Right cardiac atrium (tissue), 5 donors: ENCODE measurements at regions of chr12 and their contacts with region 1.

Region 1: GRCh38 chr12:93742110-93742934 is 65.1 kb downstream of the CRADD start:
- DNase-seq: peak; percentile 76 to 93 (median 91)
- ATAC-seq: peak; percentile 95 to 96
- H3K4me3 ChIP-seq: peak overlapping the region; percentile 84
- H3K27ac ChIP-seq: peak overlapping the region; percentile 98
- H3K4me1 ChIP-seq: peaks cover 12% of the 10 kb centered on the region
- H3K27me3 ChIP-seq: no peaks in the 10 kb centered on the region

Region 2: DNA sequence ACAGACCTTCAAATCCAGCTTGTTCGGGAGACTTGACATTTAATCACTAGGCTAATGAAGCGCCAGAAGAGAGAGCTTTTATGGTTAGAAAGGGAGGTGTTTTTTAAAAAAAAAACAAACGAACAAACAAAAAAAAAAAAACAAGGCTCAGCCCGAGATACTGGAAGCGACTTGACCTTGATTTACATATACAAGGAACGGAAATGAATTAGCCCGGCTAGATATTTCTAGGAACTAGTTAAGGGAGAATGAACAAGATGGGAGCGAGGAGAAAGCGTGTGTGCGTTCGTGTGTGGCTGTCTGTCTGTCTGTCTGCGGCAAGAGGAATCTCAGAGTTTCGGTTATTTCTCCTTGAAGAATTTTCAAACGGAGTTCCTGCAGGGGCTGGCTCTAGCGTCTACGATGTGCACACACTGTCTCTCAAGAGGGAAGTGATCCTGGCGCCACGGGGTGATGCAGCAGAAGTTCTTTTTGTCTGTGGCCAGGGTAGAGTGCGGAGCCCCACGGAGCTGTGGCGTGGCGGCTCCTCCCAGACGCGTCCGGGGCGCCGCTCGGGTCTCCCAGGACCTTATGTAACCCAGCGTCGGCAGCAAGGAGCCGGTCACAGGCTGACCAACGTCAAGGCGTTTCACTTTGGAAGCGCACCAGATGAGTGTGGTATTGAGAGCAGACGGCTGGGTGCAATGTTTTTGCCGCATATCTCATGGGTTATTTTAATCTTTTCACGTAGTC is 151.0 kb before region 1 on chr12:
- intact Hi-C with region 1: loop called in 2 of 4 experiments (anchors 5 to 10 kb)
- DNase-seq: peak; percentile 88 to 95 (median 93)
- ATAC-seq: peak; percentile 98
- H3K4me3 ChIP-seq: peak overlapping the region; percentile 32
- H3K27ac ChIP-seq: peak overlapping the region; percentile 64
- H3K4me1 ChIP-seq: peaks cover 1% of the 10 kb centered on the region
- H3K27me3 ChIP-seq: no peaks in the 10 kb centered on the region

Region 3: DNA sequence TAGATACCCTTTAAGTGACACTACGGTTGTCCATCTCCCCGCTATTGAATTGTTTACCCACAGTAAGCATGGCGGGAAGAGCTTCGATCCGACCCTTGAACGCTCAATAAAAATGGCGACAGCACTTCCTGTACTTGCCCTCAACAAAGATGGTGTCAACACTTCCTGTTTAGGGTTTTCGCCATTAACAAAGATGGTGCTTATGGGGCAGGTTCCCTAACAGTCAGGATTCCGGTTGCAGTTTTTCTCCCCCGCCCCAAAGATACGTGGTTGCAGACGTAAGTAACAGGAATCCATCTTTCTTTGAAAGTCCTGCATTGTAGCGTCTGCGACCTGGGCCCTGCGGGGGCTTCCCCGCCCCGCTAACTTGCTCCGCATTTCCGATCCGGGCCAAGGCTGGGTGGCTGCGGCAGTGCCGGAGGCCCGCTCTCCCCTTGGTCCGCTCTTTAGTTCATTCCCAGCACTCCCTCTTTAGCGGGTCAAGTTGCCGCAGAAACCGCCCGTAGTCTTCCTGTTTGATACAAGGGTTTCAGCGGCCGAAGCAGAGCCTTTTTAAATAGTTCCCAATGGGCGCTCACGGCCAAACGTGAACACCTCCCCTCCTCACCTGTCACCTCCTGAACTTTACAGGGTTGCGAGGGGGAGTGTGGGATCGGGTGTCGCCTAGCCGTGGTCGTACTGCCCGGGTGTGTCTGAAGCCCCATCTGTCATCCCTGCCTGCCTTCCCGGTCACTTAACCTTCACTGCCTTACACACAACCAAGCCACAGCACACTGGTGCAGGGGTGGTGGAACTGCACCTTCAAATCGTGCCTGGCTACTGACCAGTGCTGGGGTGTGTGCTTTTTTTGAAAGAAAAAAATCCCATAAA is 64.9 kb before region 1 on chr12 and contains the start of gene CRADD:
- intact Hi-C with region 1: loop called (anchors 5 to 10 kb)
- DNase-seq: peak; percentile 77 to 89 (median 87)
- ATAC-seq: peak; percentile 96 to 97
- H3K4me3 ChIP-seq: peak within 1 kb of the TSS; percentile 69
- H3K27ac ChIP-seq: peak within 1 kb of the TSS; percentile 100
- H3K4me1 ChIP-seq: peaks cover 7% of the 10 kb centered on the region
- H3K27me3 ChIP-seq: no peaks in the 10 kb centered on the region
- total RNA-seq, gene CRADD: 29.1 to 45.7 (median 38.3) TPM

Region 4: DNA sequence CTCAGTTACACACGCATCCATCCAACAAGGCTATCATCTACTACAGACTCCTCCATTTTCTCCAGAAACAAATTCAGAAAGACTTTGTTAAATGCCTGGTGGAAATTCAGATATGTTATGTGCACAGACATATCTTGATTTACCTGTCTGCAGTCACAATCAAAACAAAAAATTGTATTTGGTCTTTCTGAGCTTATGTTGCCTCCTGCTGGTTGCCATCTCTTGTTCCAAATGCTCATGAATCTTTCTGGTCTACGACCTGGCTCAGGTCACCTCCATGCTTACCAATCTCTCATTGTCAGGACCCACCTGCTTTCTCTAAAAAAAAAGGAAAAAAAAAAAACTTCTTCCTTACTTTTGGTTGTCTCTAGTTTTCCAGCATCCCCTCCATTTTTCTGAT is 236.9 kb after region 1 on chr12:
- intact Hi-C with region 1: loop called in 1 of 4 experiments (anchors 10 kb)
- DNase-seq: no peak
- ATAC-seq: no peak
- H3K4me3 ChIP-seq: no peak overlapping the region
- H3K27ac ChIP-seq: peak overlapping the region; percentile 45
- H3K4me1 ChIP-seq: peaks cover 18% of the 10 kb centered on the region
- H3K27me3 ChIP-seq: no peaks in the 10 kb centered on the region

Region 5: DNA sequence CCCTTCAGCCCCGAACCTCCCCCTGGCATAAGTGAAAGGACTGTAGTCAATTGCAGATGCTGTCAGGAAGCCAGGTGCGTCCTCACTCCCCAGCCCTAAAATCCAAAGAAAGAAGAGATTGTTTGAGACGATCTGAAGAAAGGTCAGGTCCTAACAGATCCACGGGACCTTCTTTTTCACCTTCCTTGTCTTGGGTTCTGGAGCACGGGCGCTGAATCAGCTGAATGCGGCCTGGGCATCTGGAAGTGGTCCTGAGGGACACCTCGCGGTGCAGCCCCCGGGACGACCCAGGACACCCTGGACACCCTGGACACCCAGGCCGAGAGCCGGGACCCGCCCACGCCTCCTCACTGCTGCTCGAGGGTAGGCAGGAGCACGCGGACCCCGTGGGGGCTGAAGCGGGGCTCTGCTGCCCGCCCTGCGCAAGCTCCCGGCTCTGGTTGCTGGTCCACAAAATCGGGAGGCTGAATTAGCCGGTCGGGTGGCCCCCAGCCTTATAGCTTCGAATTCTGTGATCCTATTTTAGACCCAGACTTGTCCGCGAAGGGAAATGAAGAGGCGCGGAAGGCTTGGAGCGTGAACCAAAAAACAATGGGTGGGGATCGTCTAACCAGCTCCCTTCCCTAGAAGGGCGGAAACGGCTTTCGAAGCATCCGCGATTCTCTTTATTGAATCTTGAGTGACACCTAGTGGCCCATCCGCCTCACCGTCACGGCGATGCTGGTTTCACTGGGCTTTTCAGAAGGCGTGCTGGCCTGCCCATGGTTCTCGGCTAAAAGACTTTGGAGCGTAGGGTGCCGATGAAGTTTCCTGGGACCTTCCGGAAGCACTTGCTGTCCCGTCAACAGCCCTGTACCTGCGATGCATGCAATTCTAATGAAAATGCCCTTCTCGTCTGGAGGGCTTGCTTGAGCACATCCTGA is 359.7 kb after region 1 on chr12:
- intact Hi-C with region 1: loop called in 1 of 4 experiments (anchors 10 kb)
- DNase-seq: peak; percentile 87 to 95 (median 91)
- ATAC-seq: peak; percentile 91
- H3K4me3 ChIP-seq: peak overlapping the region; percentile 50
- H3K27ac ChIP-seq: no peak overlapping the region
- H3K4me1 ChIP-seq: peaks cover 3% of the 10 kb centered on the region
- H3K27me3 ChIP-seq: no peaks in the 10 kb centered on the region